K562 (cell line): ENCODE measurements at regions of chr16 and their contacts with region 1.

Region 1: DNA sequence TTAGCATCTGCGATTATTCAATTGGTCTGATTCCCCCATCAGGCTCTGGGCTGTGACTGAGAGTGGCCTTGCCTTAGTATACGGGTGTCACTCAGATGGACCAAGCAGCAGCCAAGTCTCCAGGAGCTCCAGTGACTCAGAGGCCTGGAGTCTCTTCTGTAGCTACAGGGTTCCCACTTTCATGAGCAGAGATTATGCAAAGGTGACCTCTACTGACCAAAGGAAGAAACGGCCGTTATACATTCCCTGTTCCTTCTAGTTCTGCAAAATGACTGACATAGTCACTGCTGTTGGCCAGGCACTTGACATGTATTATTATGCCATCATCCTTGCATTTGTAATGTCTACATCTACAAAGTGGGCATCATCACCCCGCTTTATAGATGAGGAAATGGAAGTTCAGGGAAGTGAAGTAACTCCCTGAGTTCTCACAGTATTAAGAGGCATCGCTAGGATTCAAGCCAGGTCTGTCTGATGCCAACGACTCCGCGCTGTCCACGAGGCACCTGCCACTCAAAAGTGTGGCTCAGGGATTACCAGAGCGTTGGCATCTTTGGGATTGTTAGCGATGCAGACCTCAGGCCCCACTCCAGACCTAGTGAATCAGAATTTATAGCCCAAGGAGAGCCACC is 23.3 kb downstream of the SLC38A7 start:
- DNase-seq: peak; percentile 51 to 84 (median 64)
- ATAC-seq: peak; percentile 94
- H3K4me3 ChIP-seq: no peak overlapping the region
- H3K27ac ChIP-seq: no peak overlapping the region
- H3K4me1 ChIP-seq: peaks cover 0 to 5% of the 10 kb centered on the region in 2 experiments; a peak in 3 of 5 replicates
- H3K27me3 ChIP-seq: 0 out of 5 replicates have a peak, but pooled peaks cover 0 to 5% of the 10 kb centered on the region in 2 experiments
- CTCF ChIP-seq: peak; percentile 71 to 89 (median 81)
- EP300 ChIP-seq: no peak
- POLR2A ChIP-seq: no peak
- RAD21 ChIP-seq: peak; percentile 84 to 88

Region 2: DNA sequence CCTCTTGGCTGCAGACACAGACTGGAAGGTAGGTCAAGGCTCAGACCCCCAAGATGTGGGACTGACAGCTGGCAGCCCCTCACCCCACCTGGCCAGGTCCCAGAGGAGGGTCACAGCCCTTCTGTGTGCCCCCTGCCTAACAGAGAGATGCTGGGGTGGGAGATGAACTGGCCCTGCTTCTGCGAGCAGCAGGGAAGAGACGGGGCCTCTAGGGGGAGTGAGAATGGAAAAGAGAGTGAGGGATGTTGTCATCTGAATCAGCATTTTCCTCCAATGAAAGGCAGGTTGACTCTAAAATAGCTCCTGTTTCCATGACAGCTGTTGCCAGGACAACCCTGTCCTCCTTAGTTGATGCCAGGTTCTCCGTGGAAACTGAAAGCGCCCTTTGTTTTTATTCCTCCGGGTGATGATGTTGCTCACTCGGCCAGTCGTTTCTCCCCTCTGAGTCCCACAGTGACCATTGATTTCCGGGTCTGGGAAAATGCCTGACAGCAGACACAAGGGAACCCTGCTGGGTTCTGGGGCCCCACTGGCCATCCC is 166.3 kb before region 1 on chr16:
- CTCF ChIA-PET with region 1: no interaction called
- POLR2A ChIA-PET with region 1: no interaction called
- in situ Hi-C with region 1: no loop called
- intact Hi-C with region 1: loop called (anchors 5 kb)
- DNase-seq: peak; percentile 86 to 92 (median 90)
- ATAC-seq: peak; percentile 87
- H3K4me3 ChIP-seq: no peak overlapping the region
- H3K27ac ChIP-seq: no peak overlapping the region
- H3K4me1 ChIP-seq: peaks cover 3 to 38% of the 10 kb centered on the region in 2 experiments; a peak in 4 of 5 replicates
- H3K27me3 ChIP-seq: peaks cover 0 to 33% of the 10 kb centered on the region in 2 experiments; a peak in 3 of 5 replicates
- CTCF ChIP-seq: peak; percentile 54 to 79 (median 77)
- EP300 ChIP-seq: no peak
- POLR2A ChIP-seq: no peak
- RAD21 ChIP-seq: peak in 1 of 2 experiments; percentile 28; a peak in 1 of 4 replicates

Region 3: DNA sequence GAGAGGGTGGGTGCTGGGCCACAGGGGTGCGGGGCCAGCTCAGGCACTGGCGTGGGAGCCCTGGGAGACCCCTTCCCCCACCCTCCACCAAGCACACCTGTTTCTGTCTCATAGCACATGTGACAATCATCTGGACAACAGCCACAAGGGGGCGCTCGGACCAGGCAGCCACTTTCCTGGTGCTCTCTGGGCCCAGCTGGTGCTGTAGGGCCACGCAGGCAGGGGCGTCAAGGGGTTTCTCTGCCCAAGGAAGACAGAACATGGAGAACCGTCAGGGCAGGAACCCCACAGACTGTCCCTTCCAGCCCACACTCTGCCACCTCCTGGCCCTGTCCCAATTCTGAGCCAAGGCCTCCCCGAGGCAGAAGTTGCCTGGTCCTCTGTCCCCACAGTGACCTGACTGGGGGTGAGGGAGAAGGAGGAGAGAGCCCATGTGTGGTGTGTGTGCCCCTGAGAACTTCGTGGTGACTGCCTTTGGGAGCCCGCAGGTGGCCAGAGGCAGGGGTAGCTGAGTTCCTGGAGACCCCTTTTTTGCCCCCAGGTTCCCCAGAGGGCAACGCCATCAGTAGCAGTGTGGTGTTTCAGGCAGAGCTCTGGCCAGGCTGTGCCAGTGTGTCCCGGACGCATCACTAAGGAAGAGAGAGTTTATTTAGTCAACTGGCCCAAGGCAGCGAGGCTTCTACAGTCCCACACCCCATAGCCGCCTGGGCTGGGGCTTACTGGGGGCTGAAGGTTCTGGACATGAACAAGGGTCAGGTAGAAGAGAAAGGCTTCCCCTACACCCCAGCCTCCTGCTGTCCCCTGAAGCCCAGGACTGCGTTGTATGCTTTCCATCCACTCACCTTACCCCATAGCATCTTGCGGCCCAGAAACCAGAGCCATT is 149.1 kb before region 1 on chr16:
- CTCF ChIA-PET with region 1: interaction called, 8 read pairs
- POLR2A ChIA-PET with region 1: interaction called, 3 read pairs
- in situ Hi-C with region 1: no loop called
- intact Hi-C with region 1: loop called (anchors 1 kb)
- DNase-seq: peak; percentile 58 to 89 (median 64)
- ATAC-seq: peak; percentile 64
- H3K4me3 ChIP-seq: no peak overlapping the region
- H3K27ac ChIP-seq: no peak overlapping the region
- H3K4me1 ChIP-seq: peaks cover 4 to 54% of the 10 kb centered on the region in 2 experiments; a peak in 4 of 5 replicates
- H3K27me3 ChIP-seq: no peaks in the 10 kb centered on the region
- CTCF ChIP-seq: peak; percentile 74 to 87 (median 86)
- EP300 ChIP-seq: no peak
- POLR2A ChIP-seq: no peak
- RAD21 ChIP-seq: peak; percentile 60 to 75

Region 4: DNA sequence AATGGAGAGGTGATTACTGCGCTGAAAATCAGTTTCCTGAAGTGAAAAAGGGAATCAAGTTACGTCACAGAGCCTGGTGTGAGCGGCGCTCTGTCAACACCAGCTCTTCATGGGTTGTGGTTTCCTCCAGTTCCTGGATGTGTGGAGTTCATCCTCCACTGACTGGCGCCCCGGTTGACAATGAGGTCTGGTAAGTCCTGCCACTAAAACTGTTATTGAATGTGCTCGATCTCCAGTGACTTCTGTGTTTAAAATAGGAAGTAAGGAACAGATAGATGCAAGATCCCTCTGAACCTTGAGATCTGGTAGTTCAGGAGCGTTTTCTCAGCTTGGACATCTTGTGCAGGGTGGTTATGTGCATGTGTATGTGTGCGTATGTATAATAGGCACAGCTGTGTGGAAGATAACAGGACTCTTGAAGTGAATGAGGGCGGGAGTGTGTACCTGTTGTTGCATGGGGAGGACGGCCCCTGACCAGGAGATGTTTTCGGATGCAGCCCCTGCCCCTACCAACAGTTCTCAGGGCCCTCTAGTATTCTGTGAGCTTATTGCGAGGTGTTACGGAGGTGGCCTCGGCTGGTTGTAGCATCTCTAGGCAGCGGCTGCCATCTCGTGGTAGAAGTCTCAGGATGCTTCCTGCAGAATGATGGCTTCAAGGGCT is 94.8 kb after region 1 on chr16:
- CTCF ChIA-PET with region 1: no interaction called
- POLR2A ChIA-PET with region 1: no interaction called
- in situ Hi-C with region 1: no loop called
- intact Hi-C with region 1: loop called (anchors 1 kb)
- DNase-seq: peak; percentile 54 to 86 (median 64)
- ATAC-seq: peak; percentile 98
- H3K4me3 ChIP-seq: no peak overlapping the region
- H3K27ac ChIP-seq: no peak overlapping the region
- H3K4me1 ChIP-seq: peaks cover 0 to 6% of the 10 kb centered on the region in 2 experiments; a peak in 3 of 5 replicates
- H3K27me3 ChIP-seq: peaks cover 0 to 9% of the 10 kb centered on the region in 2 experiments; a peak in 3 of 5 replicates
- CTCF ChIP-seq: peak; percentile 80 to 89 (median 87)
- EP300 ChIP-seq: no peak
- POLR2A ChIP-seq: no peak
- RAD21 ChIP-seq: peak; percentile 79 to 88